A549 (cell line): ENCODE measurements at regions of chr1 and their contacts with region 1.

Region 1: GRCh38 chr1:205121660-205122488 is at the start of gene RBBP5:
- DNase-seq: peak; percentile 98 to 99
- ATAC-seq: peak; percentile 100
- H3K4me3 ChIP-seq: peak within 1 kb of the TSS; percentile 92
- H3K27ac ChIP-seq: peak within 1 kb of the TSS; percentile 89 to 96
- H3K4me1 ChIP-seq: peaks cover 21% of the 10 kb centered on the region
- CTCF ChIP-seq: peak; percentile 88
- EP300 ChIP-seq: 0 out of 5 replicates have a peak, but pooled peaks of 1 of the 2 experiments have one; percentile 21
- POLR2A ChIP-seq: peak; percentile 86
- RAD21 ChIP-seq: peak; percentile 64 to 67
- polyA plus RNA-seq, gene RBBP5: 18.6 and 21.8 TPM in 2 replicates

Region 2: DNA sequence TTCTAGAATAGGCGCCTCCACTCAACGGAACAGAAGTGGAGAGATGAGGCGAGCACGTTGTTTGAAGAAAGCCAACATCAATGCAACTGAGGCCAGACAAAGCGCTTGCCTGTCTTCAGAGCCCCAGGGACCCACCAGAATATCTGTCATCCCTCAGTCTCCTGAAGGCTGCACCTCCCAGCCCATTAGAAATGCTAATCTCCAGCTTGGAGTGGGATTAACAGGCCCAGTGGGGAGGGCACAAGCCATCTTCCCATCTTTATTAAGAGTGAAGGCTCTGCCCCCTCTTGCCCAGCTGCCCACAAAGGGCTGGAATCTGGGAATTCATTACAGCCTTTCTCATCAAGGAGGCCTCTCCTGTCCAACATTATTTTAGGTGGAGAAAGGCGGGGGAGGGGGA is 95.7 kb before region 1 on chr1:
- CTCF ChIA-PET with region 1: no interaction called
- POLR2A ChIA-PET with region 1: no interaction called
- DNase-seq: no peak
- ATAC-seq: no peak
- H3K4me3 ChIP-seq: no peak overlapping the region
- H3K27ac ChIP-seq: no peak overlapping the region
- H3K4me1 ChIP-seq: no peaks in the 10 kb centered on the region
- CTCF ChIP-seq: no peak
- EP300 ChIP-seq: no peak
- POLR2A ChIP-seq: no peak
- RAD21 ChIP-seq: no peak

Region 3: GRCh38 chr1:205111354-205111753 is 10.5 kb before region 1 on chr1:
- CTCF ChIA-PET with region 1: interaction called, 31 read pairs
- POLR2A ChIA-PET with region 1: interaction called, 5 read pairs
- DNase-seq: no peak
- ATAC-seq: no peak
- H3K4me3 ChIP-seq: no peak overlapping the region
- H3K27ac ChIP-seq: no peak overlapping the region
- H3K4me1 ChIP-seq: no peaks in the 10 kb centered on the region
- CTCF ChIP-seq: no peak
- EP300 ChIP-seq: no peak
- POLR2A ChIP-seq: no peak
- RAD21 ChIP-seq: no peak

Region 4: DNA sequence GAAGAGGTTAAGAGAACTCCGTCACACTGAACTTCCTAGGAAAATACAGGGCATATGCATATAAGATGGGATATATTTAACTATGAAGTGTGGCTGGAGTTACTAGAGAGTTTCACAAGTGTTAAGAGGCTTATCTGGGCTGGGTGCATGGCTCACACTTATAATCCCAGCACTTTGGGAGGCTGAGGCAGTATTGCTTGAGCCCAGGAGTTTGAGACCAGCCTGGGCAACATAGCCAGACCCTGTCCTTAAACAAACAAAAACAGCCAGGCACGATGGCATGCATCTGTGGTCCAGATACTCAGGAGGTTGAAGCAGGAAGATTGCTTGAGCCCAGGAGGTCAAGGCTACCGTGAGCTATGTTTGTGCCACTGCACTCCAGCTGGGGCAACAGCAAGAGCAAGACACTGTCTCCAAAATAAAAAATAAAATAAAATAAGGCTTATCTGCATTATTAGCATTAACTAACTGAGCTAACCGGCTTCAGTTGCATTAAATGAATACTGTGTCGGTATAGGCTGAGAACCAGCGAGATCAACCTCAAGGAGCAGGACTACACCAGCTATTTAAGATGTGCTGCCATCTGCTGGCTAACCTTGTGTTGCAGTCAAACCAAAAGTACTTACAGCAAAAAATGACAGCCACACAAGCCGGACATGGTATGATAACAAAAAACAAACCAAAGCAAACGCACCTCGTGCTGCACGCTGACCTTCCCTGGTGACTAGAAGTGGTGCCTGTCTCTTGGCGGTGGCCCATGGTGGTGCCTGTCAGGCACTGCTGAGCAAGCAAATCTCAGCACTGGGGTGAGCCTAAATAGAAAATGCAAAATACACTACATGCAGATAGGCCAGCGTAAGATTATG is 19.6 kb after region 1 on chr1:
- CTCF ChIA-PET with region 1: interaction called, 56 read pairs
- POLR2A ChIA-PET with region 1: interaction called, 4 read pairs
- DNase-seq: peak; percentile 76 to 83
- ATAC-seq: peak; percentile 88 to 94
- H3K4me3 ChIP-seq: no peak overlapping the region
- H3K27ac ChIP-seq: peak overlapping the region in 1 of 2 experiments; percentile 63; a peak in 2 of 6 replicates
- H3K4me1 ChIP-seq: peaks cover 16% of the 10 kb centered on the region
- CTCF ChIP-seq: peak; percentile 82
- EP300 ChIP-seq: no peak
- POLR2A ChIP-seq: no peak
- RAD21 ChIP-seq: peak; percentile 52 to 59; a peak in 4 of 5 replicates

Region 5: DNA sequence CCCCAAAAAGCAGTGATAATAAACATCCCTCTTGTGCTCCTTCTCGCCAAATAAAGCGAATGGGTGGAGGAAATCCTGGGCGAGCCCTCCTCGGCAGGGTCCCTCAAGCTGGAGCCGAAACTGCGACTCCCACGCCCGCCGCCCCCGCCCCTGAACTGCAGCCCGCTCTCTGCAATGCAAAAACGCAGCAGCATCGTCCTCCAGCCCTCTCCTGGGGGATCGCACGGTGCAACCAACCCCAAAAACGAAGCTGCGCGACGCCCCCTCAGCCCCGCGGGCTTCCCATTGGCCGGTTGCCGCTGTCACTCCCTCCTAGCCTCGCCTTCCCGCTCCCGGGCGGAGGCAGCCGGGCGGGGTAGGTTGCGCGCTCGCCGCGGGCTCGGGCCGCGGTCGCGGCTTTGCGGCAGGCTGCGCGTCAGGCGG is 105.7 kb after region 1 on chr1 and contains the start of gene TMCC2:
- CTCF ChIA-PET with region 1: interaction called, 33 read pairs
- POLR2A ChIA-PET with region 1: interaction called, 9 read pairs
- DNase-seq: peak; percentile 84 to 97
- ATAC-seq: peak; percentile 83 to 92
- H3K4me3 ChIP-seq: peak within 1 kb of the TSS; percentile 69
- H3K27ac ChIP-seq: peak within 1 kb of the TSS; percentile 64 to 88
- H3K4me1 ChIP-seq: peaks cover 12% of the 10 kb centered on the region; the same call in 2 of the 3 replicates
- CTCF ChIP-seq: no peak
- EP300 ChIP-seq: no peak
- POLR2A ChIP-seq: peak; percentile 51
- RAD21 ChIP-seq: no peak; a peak in 1 of 5 replicates
- polyA plus RNA-seq, gene TMCC2: 1.6 and 1.7 TPM in 2 replicates

Region 6: GRCh38 chr1:205300886-205301821 is 179.3 kb after region 1 on chr1:
- CTCF ChIA-PET with region 1: no interaction called
- POLR2A ChIA-PET with region 1: no interaction called
- DNase-seq: peak in 1 of 2 experiments; percentile 96
- ATAC-seq: peak; percentile 53 to 54
- H3K4me3 ChIP-seq: peak overlapping the region; percentile 8; the same call in 1 of the 3 replicates
- H3K27ac ChIP-seq: peak overlapping the region; percentile 98 to 99
- H3K4me1 ChIP-seq: peaks cover 94% of the 10 kb centered on the region
- CTCF ChIP-seq: no peak
- EP300 ChIP-seq: peak; percentile 95 to 99; a peak in 4 of 5 replicates
- POLR2A ChIP-seq: no peak
- RAD21 ChIP-seq: peak; percentile 32 to 62

Region 7: GRCh38 chr1:205668951-205669340 is 547.1 kb after region 1 on chr1:
- CTCF ChIA-PET with region 1: no interaction called
- POLR2A ChIA-PET with region 1: no interaction called
- DNase-seq: no peak
- ATAC-seq: 0 out of 6 replicates have a peak, but pooled peaks of 1 of the 2 experiments have one; percentile 29
- H3K4me3 ChIP-seq: no peak overlapping the region
- H3K27ac ChIP-seq: peak overlapping the region in 1 of 2 experiments; percentile 56; a peak in 3 of 6 replicates
- H3K4me1 ChIP-seq: peaks cover 20% of the 10 kb centered on the region; the same call in 2 of the 3 replicates
- CTCF ChIP-seq: no peak
- EP300 ChIP-seq: no peak
- POLR2A ChIP-seq: no peak
- RAD21 ChIP-seq: no peak